Naive thymus-derived CD4-positive, alpha-beta T cell (primary cell): ENCODE measurements at regions of chr5 and their contacts with region 1.

Region 1: GRCh38 chr5:93607367-93608258 is 24.6 kb downstream of the NR2F1 start:
- DNase-seq: peak in 1 of 9 donors; percentile 41
- ATAC-seq: peak; percentile 78
- H3K4me3 ChIP-seq: no peak overlapping the region
- H3K4me3 Mint-ChIP-seq: peak overlapping the region in 6 of 10 donors; percentile 10 to 44 (median 34)
- H3K27ac ChIP-seq: no peak overlapping the region
- H3K27ac Mint-ChIP-seq: no peak overlapping the region
- H3K4me1 ChIP-seq: peaks cover 3 to 7% of the 10 kb centered on the region in 2 donors
- H3K4me1 Mint-ChIP-seq: peaks cover 0 to 24% (median 22%) of the 10 kb centered on the region in 7 donors
- H3K27me3 ChIP-seq: peaks cover 42 to 48% of the 10 kb centered on the region in 2 donors
- H3K27me3 Mint-ChIP-seq: peaks cover 75 to 94% (median 79%) of the 10 kb centered on the region in 5 donors

Region 2: DNA sequence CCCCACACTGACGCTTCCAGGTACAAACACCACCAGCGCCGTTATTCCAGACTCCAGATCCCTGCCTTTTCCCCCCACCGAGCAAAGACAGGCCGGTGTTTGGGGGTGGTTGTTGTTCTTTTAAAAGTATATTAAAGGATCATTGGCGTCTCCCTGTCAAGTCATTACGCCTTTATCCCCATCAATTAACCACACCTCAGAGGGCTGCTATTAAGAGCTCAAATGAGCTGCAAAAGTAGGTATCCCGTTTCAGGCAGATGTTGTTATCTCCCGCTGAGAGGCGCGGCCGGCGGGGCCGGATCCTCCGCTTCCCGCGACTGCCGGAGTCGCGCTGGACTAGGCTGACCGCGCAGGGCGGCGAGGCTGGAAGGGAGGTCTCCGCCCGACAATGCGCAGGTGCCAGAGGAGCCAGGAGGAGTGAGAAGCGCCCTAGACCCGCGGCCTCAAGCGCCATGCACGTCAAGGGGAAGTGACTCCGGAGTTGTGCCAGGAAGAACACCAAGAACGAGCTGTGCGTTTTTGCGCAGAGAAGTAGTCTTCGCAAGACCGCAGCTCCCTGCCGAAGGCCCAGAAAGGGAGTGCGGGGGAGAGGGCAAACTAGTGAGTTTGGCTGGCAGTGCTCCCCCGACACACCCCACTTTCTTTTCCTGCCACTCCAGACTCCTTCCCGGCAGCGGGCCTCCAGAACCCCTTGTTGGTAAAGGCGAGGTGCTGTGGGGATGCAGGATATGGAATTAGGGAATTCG is 34.8 kb before region 1 on chr5:
- CTCF ChIA-PET with region 1: interaction called, 5 read pairs
- POLR2A ChIA-PET with region 1: no interaction called
- intact Hi-C with region 1: loop called in 1 of 2 experiments (anchors 2 kb)
- DNase-seq: peak in 1 of 9 donors; percentile 25
- ATAC-seq: no peak
- H3K4me3 ChIP-seq: no peak overlapping the region
- H3K4me3 Mint-ChIP-seq: peak overlapping the region in 2 of 10 donors; percentile 23 to 35
- H3K27ac ChIP-seq: no peak overlapping the region
- H3K27ac Mint-ChIP-seq: no peak overlapping the region
- H3K4me1 ChIP-seq: peaks cover 0 to 15% of the 10 kb centered on the region in 2 donors
- H3K4me1 Mint-ChIP-seq: peaks cover 0 to 34% (median 18%) of the 10 kb centered on the region in 7 donors
- H3K27me3 ChIP-seq: peaks cover 16 to 34% of the 10 kb centered on the region in 2 donors
- H3K27me3 Mint-ChIP-seq: peaks cover 84 to 93% (median 87%) of the 10 kb centered on the region in 5 donors

Region 3: DNA sequence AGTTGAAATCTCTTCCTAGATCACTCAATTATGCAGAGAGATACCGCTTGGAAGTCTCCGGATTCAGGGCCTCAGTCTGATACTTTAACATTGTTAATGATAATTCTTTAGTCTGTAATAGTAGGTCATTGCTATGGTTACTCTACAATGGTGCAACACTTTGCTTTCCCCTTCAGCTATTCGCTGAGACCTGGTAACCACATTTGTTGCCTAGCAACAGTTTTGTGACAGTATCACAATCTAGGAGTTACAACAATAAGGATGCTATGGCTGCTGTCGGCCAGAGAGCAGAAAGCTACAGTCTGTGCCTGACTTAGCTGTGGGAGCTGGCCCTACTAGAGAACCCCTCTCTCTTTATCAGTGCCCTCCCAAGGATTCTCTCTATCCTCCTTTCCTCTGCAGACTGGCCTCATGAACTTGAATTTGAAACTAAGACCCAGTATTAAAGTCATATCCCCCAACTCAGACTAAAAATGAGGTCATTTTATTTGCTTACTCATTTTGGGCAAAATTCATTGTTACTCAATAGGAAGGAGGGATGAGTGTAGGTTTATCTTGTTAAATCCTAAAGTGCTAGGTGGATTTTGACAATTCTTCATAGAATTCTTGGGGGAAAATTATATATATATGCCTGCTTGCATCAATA is 14.8 kb after region 1 on chr5:
- CTCF ChIA-PET with region 1: no interaction called
- POLR2A ChIA-PET with region 1: no interaction called
- intact Hi-C with region 1: loop called in 1 of 2 experiments (anchors 2 kb)
- DNase-seq: peak in 7 of 9 donors; percentile 33 to 70 (median 56)
- ATAC-seq: peak; percentile 80
- H3K4me3 ChIP-seq: no peak overlapping the region
- H3K4me3 Mint-ChIP-seq: peak overlapping the region; percentile 1 to 93 (median 60)
- H3K27ac ChIP-seq: no peak overlapping the region
- H3K27ac Mint-ChIP-seq: peak overlapping the region in 5 of 9 donors; percentile 26 to 49 (median 30)
- H3K4me1 ChIP-seq: peaks cover 7 to 14% of the 10 kb centered on the region in 2 donors
- H3K4me1 Mint-ChIP-seq: peaks cover 10 to 23% (median 21%) of the 10 kb centered on the region in 7 donors
- H3K27me3 ChIP-seq: no peaks in the 10 kb centered on the region
- H3K27me3 Mint-ChIP-seq: peaks cover 10 to 57% (median 13%) of the 10 kb centered on the region in 5 donors

Region 4: DNA sequence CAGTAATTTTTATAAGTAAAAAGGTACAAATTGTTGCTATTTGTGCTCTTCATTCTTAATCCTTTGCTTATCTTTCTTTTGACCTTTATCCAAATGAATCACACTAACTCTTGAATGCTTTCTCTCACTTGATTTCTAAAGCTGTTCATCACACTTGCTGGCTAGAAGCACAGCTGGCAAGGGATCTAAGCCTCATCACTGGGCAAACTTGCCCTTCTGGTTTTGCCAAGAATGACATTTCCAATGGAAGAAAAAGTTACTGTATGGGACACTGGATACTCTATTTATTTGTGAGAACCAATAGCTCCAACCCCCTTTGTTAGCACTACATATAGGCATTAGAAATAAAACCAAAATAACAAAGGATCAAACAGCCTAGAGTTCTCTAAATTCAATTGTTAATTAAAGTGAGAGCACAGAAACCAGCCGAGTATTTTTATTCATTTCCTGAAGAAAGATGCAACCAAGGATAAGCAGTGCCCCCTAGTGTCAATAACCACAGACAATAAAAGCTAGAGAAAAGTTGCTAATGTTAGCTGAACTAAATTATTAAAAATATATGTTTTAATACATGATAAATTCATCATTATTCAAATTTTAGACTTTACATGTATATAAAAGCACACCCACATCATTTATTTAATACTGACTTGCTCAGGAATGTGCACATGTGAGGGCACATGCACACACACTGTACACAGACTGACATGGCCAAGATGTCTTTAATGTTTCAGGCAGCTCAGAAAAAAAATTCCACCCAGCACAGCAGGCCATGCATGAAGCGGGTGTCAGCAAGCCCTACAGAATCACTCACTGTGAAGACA is 193.6 kb after region 1 on chr5:
- CTCF ChIA-PET with region 1: interaction called, 3 read pairs
- POLR2A ChIA-PET with region 1: no interaction called
- intact Hi-C with region 1: loop called (anchors 1 kb)
- DNase-seq: peak in 5 of 9 donors; percentile 16 to 38 (median 30)
- ATAC-seq: peak; percentile 50
- H3K4me3 ChIP-seq: no peak overlapping the region
- H3K4me3 Mint-ChIP-seq: no peak overlapping the region
- H3K27ac ChIP-seq: no peak overlapping the region
- H3K27ac Mint-ChIP-seq: peak overlapping the region in 2 of 9 donors; percentile 4 to 61
- H3K4me1 ChIP-seq: no peaks in the 10 kb centered on the region
- H3K4me1 Mint-ChIP-seq: peaks cover 0 to 4% (median 0%) of the 10 kb centered on the region in 7 donors
- H3K27me3 ChIP-seq: no peaks in the 10 kb centered on the region
- H3K27me3 Mint-ChIP-seq: peaks cover 0 to 5% (median 0%) of the 10 kb centered on the region in 5 donors

Region 5: GRCh38 chr5:93915142-93915553 is 307.5 kb after region 1 on chr5:
- CTCF ChIA-PET with region 1: no interaction called
- POLR2A ChIA-PET with region 1: no interaction called
- intact Hi-C with region 1: loop called in 1 of 2 experiments (anchors 1 kb)
- DNase-seq: peak in 6 of 9 donors; percentile 4 to 46 (median 29)
- ATAC-seq: peak; percentile 54
- H3K4me3 ChIP-seq: no peak overlapping the region
- H3K4me3 Mint-ChIP-seq: no peak overlapping the region
- H3K27ac ChIP-seq: no peak overlapping the region
- H3K27ac Mint-ChIP-seq: no peak overlapping the region
- H3K4me1 ChIP-seq: no peaks in the 10 kb centered on the region
- H3K4me1 Mint-ChIP-seq: peaks cover 0 to 5% (median 0%) of the 10 kb centered on the region in 7 donors
- H3K27me3 ChIP-seq: no peaks in the 10 kb centered on the region
- H3K27me3 Mint-ChIP-seq: peaks cover 0 to 2% (median 0%) of the 10 kb centered on the region in 5 donors

Region 6: GRCh38 chr5:94111209-94112004 is 503.8 kb after region 1 on chr5:
- CTCF ChIA-PET with region 1: no interaction called
- POLR2A ChIA-PET with region 1: no interaction called
- intact Hi-C with region 1: loop called in 1 of 2 experiments (anchors 10 kb)
- DNase-seq: peak; percentile 77 to 93 (median 90)
- ATAC-seq: peak; percentile 96
- H3K4me3 ChIP-seq: peak overlapping the region; percentile 90
- H3K4me3 Mint-ChIP-seq: peak overlapping the region; percentile 88 to 97 (median 95)
- H3K27ac ChIP-seq: peak overlapping the region; percentile 85
- H3K27ac Mint-ChIP-seq: peak overlapping the region; percentile 93 to 97 (median 96)
- H3K4me1 ChIP-seq: peaks cover 8 to 10% of the 10 kb centered on the region in 2 donors
- H3K4me1 Mint-ChIP-seq: peaks cover 21 to 50% (median 47%) of the 10 kb centered on the region in 7 donors
- H3K27me3 ChIP-seq: no peaks in the 10 kb centered on the region
- H3K27me3 Mint-ChIP-seq: peaks cover 0 to 15% (median 14%) of the 10 kb centered on the region in 5 donors